Activated CD4-positive, alpha-beta memory T cell treated with anti-CD3 and anti-CD28 coated beads for 36 hours (primary cell): ENCODE measurements at regions of chr2 and their contacts with region 1.

Region 1: GRCh38 chr2:230254152-230254881 is 28.8 kb downstream of the SP140 start:
- DNase-seq: peak; percentile 80
- H3K4me3 Mint-ChIP-seq: no peak overlapping the region
- H3K27ac Mint-ChIP-seq: no peak overlapping the region
- H3K4me1 Mint-ChIP-seq: peaks cover 18% of the 10 kb centered on the region
- H3K27me3 Mint-ChIP-seq: no peaks in the 10 kb centered on the region

Region 2: DNA sequence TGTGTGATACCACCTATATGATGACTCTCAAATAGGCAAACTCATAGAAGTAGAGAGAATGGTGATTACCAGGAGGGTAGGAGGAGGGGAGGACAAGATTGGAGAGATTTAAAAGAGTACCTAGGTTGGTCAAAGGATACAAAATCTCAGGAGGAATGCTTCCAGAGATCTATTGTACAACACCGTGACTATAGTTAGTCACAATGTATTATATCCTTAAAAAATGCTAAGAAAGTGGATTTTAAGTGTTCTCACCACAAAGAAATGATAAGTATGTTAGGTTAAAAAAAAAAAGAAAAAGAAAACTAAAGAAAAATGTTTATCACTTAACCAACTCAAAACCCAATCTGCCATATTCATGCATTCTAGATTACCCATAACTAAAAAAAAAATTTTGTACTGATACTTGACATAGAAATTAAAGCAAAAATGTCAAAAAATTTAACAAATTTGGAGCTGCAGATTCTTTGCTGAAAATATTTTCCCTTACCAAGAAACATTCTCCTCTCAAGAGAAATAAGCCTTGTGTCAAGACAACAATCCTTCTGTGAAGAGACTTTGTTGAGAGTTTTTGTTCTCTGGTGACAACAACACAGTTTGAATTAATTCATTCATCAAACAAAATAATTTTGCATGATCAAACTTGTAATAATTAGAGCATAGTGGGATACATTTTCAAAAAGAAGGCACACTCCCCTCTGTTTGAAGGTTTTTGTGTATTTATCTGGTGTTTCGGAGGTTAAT is 753.1 kb before region 1 on chr2:
- CTCF ChIA-PET with region 1: no interaction called
- POLR2A ChIA-PET with region 1: no interaction called
- intact Hi-C with region 1: no loop called
- DNase-seq: no peak
- H3K4me3 Mint-ChIP-seq: no peak overlapping the region
- H3K27ac Mint-ChIP-seq: no peak overlapping the region
- H3K4me1 Mint-ChIP-seq: no peaks in the 10 kb centered on the region
- H3K27me3 Mint-ChIP-seq: peaks cover 2% of the 10 kb centered on the region

Region 3: GRCh38 chr2:230130668-230131364 is 123.5 kb before region 1 on chr2:
- CTCF ChIA-PET with region 1: no interaction called
- POLR2A ChIA-PET with region 1: no interaction called
- intact Hi-C with region 1: no loop called
- DNase-seq: no peak
- H3K4me3 Mint-ChIP-seq: no peak overlapping the region
- H3K27ac Mint-ChIP-seq: no peak overlapping the region
- H3K4me1 Mint-ChIP-seq: no peaks in the 10 kb centered on the region
- H3K27me3 Mint-ChIP-seq: no peaks in the 10 kb centered on the region

Region 4: GRCh38 chr2:230202430-230203109 is 51.7 kb before region 1 on chr2:
- CTCF ChIA-PET with region 1: interaction called, 4 read pairs
- POLR2A ChIA-PET with region 1: interaction called, 4 read pairs
- intact Hi-C with region 1: loop called (anchors 1 kb)
- DNase-seq: peak; percentile 75
- H3K4me3 Mint-ChIP-seq: peak overlapping the region; percentile 10
- H3K27ac Mint-ChIP-seq: peak overlapping the region; percentile 80
- H3K4me1 Mint-ChIP-seq: peaks cover 35% of the 10 kb centered on the region
- H3K27me3 Mint-ChIP-seq: no peaks in the 10 kb centered on the region

Region 5: DNA sequence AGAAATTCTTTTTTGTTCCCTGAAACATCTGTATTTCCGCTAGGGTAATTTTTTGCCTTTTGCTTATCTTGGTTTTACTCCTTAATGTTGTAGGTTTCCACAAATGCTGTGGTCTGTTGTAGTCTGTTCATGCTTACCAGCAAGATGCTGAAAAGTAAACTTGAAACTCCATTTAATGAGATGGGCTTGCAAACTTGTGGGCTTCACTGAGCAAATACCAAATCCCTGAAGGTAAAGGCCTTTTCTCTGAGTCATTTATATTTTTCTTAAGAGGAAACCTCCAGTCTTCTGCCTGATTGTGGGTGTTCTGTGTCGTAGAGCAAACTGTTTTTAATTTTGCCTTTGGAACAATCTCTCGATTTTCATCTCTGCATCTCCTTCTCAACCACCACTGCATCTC is 19.5 kb before region 1 on chr2:
- CTCF ChIA-PET with region 1: no interaction called
- POLR2A ChIA-PET with region 1: interaction called, 3 read pairs
- intact Hi-C with region 1: loop called (anchors 1 kb)
- DNase-seq: no peak
- H3K4me3 Mint-ChIP-seq: peak overlapping the region; percentile 23
- H3K27ac Mint-ChIP-seq: peak overlapping the region; percentile 83
- H3K4me1 Mint-ChIP-seq: peaks cover 55% of the 10 kb centered on the region
- H3K27me3 Mint-ChIP-seq: no peaks in the 10 kb centered on the region

Region 6: DNA sequence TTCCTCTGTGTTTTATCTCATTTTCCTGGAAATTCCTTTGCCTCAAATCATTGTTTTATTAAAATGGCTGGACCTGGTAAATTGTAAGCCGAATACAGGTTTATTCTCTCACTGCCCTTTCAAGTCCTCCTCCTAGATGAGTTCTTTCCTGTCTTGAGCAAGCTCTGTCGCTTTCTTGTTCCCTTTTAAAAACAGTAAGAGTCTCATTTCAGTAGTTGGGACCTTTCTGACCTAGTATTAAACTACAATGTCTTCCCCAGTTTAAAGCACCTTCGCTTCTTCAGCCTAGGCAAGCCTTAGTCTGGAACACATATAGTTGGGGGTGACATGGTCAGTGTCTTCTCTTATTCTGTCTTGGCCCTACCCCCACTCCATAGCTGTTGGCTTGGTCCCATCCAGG is 31.7 kb after region 1 on chr2:
- CTCF ChIA-PET with region 1: no interaction called
- POLR2A ChIA-PET with region 1: no interaction called
- intact Hi-C with region 1: loop called (anchors 1 kb)
- DNase-seq: no peak
- H3K4me3 Mint-ChIP-seq: no peak overlapping the region
- H3K27ac Mint-ChIP-seq: no peak overlapping the region
- H3K4me1 Mint-ChIP-seq: peaks cover 29% of the 10 kb centered on the region
- H3K27me3 Mint-ChIP-seq: no peaks in the 10 kb centered on the region

Region 7: DNA sequence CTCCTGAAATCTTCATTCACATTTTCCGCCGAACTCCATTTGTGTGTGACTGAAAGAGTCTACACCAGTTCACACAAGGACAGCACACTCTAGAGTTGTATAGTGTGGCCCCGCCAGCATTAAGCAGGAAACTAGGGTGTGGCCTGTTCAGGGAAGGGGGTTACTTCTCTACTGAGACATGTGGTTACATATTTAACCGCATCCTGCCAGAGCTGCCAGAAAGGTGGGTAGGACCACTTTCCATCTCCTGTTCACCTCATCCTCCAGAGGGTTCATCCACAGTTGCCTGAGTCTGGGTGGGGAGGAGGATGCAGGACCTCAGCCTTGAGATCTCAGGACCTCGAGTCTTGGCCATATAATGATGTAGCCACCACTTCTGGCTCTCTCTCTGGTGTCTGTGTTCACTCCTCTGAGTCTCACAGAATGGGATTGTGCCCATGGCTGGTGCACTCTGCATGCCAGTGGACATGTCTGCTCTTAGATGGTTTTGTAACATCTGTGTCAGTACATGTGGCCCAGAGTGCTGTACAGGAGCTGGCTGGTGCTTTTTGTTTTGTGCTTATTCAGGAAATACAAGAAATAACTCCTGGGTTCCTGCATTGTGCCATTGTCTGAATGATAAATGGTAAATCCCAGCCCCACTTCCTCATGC is 65.0 kb after region 1 on chr2:
- CTCF ChIA-PET with region 1: no interaction called
- POLR2A ChIA-PET with region 1: no interaction called
- intact Hi-C with region 1: loop called (anchors 2 kb)
- DNase-seq: peak; percentile 83
- H3K4me3 Mint-ChIP-seq: peak overlapping the region; percentile 6
- H3K27ac Mint-ChIP-seq: peak overlapping the region; percentile 80
- H3K4me1 Mint-ChIP-seq: peaks cover 60% of the 10 kb centered on the region
- H3K27me3 Mint-ChIP-seq: no peaks in the 10 kb centered on the region